Colonic mucosa (tissue), 4 donors: ENCODE measurements at regions of chr12 and their contacts with region 1.

Region 1: GRCh38 chr12:93025145-93025805 is 96.2 kb upstream of the EEA1 start:
- DNase-seq: no peak
- H3K4me3 ChIP-seq: no peak overlapping the region
- H3K27ac ChIP-seq: no peak overlapping the region
- H3K4me1 ChIP-seq: peaks cover 4% of the 10 kb centered on the region
- H3K27me3 ChIP-seq: no peaks in the 10 kb centered on the region
- CTCF ChIP-seq: peak; percentile 25

Region 2: GRCh38 chr12:93167841-93168492 is 142.7 kb after region 1 on chr12:
- intact Hi-C with region 1: loop called (anchors 10 kb)
- DNase-seq: peak; percentile 54
- H3K4me3 ChIP-seq: peak overlapping the region; percentile 29
- H3K27ac ChIP-seq: peak overlapping the region; percentile 62
- H3K4me1 ChIP-seq: peaks cover 3% of the 10 kb centered on the region
- H3K27me3 ChIP-seq: no peaks in the 10 kb centered on the region
- CTCF ChIP-seq: no peak